ENCODE measurements at regions of chr10 and their contacts with region 1.

Region 1: DNA sequence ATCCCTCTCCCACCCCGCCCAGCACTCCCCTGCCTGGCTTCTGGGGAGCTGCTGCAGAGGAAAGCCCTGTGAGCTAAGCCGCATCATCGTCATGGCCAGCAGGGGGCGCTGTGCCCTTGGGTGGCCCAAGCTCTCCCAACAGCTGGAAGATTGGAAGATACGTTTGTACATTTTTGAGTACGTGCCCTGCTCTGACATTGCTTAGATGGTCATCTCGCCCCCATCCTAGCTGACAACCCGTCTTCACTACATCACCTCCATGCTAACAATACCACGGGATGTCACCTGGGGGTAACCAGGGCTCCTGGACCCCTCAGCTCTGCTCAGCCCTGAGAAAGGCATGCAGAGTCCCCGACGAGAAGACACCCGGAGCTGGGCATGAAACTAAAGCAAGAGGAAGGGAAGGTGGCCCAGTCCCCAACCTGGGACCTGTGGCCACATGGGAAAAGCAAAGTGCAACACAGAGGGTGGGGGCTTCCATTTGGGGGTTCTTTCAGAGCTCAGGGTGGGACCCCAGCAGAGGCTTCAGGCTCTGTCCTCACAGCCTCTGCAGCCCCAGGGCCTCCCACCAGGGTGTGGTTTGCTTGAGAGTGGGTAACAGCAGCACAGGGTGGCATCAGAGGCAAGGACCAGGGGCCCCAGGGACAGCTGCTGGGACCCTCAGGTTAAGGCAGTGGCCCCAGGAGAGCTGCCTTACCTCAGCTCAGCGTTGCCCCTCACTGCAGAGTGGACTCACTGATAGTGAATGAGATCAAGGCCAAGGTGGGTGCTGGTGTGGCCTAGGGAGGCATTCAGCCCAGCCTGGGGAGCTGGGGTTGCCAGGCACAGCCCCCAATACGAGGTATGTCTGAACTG is 136.7 kb downstream of the PTPN20 start:
- DNase-seq: no peak
- H3K4me3 ChIP-seq: no peak overlapping the region
- H3K27me3 ChIP-seq: no peaks in the 10 kb centered on the region
- CTCF ChIP-seq: peak; percentile 91

Region 2: GRCh38 chr10:47024399-47025252 is 23.3 kb before region 1 on chr10:
- CTCF ChIA-PET with region 1: interaction called, 32 read pairs
- POLR2A ChIA-PET with region 1: no interaction called
- DNase-seq: no peak
- H3K4me3 ChIP-seq: no peak overlapping the region
- H3K27me3 ChIP-seq: no peaks in the 10 kb centered on the region
- CTCF ChIP-seq: peak; percentile 89

Region 3: GRCh38 chr10:47058961-47059391 is 11.1 kb after region 1 on chr10:
- CTCF ChIA-PET with region 1: interaction called, 12 read pairs
- POLR2A ChIA-PET with region 1: no interaction called
- DNase-seq: peak; percentile 22
- H3K4me3 ChIP-seq: no peak overlapping the region
- H3K27me3 ChIP-seq: peaks cover 5% of the 10 kb centered on the region; the same call in 1 of the 2 replicates
- CTCF ChIP-seq: no peak

Region 4: GRCh38 chr10:47195274-47195885 is 147.5 kb after region 1 on chr10:
- CTCF ChIA-PET with region 1: no interaction called
- POLR2A ChIA-PET with region 1: no interaction called
- DNase-seq: no peak
- H3K4me3 ChIP-seq: no peak overlapping the region
- H3K27me3 ChIP-seq: peaks cover 3% of the 10 kb centered on the region; the same call in 1 of the 2 replicates
- CTCF ChIP-seq: no peak

Region 5: GRCh38 chr10:47225219-47225927 is 177.5 kb after region 1 on chr10:
- CTCF ChIA-PET with region 1: interaction called, 16 read pairs
- POLR2A ChIA-PET with region 1: no interaction called
- DNase-seq: no peak
- H3K4me3 ChIP-seq: no peak overlapping the region
- H3K27me3 ChIP-seq: peaks cover 2% of the 10 kb centered on the region; the same call in 1 of the 2 replicates
- CTCF ChIP-seq: 0 out of 2 replicates have a peak, but pooled peaks have one; percentile 16

Region 6: GRCh38 chr10:47311932-47312662 is 264.2 kb after region 1 on chr10:
- CTCF ChIA-PET with region 1: interaction called, 215 read pairs
- POLR2A ChIA-PET with region 1: no interaction called
- DNase-seq: peak; percentile 1
- H3K4me3 ChIP-seq: no peak overlapping the region
- H3K27me3 ChIP-seq: peaks cover 1% of the 10 kb centered on the region; the same call in 1 of the 2 replicates
- CTCF ChIP-seq: peak; percentile 96